ENCODE measurements at regions of chr6 and their contacts with region 1.

Region 1: DNA sequence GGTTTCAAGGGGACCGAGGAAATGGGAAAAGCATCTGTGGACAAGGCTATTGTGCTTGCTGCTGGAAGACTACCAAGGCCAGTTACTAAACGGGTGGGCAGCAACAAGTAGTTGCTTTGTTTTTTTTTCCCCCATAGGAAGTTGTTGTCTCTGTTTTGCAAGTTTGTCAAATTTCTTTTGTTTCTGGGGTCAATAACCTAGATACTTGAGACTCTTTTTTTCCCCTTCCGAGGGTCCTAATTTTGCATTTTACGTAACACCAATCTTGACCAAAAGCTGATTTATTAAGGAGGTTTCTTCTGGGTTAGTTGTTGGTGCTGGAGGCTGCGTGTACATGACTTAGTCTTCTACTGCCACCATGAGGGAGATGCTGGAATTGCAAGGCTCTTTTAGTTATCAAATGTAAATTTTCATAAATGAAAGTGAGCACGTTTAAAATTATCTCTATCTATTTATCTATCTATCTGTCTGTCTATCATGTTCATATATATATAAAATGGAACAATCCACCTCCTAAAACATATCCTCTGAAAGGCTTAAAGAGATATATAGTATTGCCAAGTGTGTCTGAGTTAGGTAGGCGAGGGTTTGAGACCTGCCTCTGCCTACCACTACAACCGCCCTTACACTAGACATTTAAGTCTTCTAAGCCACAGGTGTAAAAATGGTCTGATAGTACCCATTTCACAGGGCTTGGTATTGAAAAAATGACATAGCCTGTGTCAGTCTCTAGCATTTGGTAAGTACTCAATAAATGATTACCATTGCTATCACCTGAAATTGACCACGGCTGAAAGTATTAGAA is 60.2 kb downstream of the GCLC start:
- DNase-seq: peak; percentile 36 to 75 (median 56)
- ATAC-seq: peak; percentile 81
- H3K4me3 ChIP-seq: no peak overlapping the region
- H3K27ac ChIP-seq: no peak overlapping the region
- H3K4me1 ChIP-seq: peaks cover 0 to 15% of the 10 kb centered on the region in 2 experiments; a peak in 2 of 5 replicates
- H3K27me3 ChIP-seq: no peaks in the 10 kb centered on the region; a peak in 1 of 5 replicates
- CTCF ChIP-seq: peak; percentile 84 to 98 (median 85)
- EP300 ChIP-seq: no peak
- POLR2A ChIP-seq: no peak
- RAD21 ChIP-seq: peak; percentile 94 to 98

Region 2: DNA sequence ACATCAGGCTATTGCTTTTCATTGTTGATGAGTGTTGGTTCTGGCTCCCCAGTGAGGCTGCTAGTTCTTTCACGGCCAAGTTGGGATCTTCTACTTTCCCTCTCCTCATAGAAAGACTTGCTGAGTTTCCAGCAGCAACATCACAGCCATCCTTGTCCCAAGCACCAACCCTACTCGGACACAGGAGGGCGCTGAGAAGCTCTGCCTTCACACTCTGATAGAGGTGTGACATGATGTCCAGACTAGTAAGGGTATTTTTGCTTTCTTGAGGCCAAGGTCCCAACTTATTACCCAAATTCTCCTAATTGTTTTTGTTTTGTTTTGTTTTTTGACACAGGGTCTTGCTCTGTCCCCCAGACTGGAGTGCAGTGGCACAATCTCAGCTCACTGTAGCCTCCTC is 333.0 kb before region 1 on chr6:
- CTCF ChIA-PET with region 1: interaction called, 4 read pairs
- POLR2A ChIA-PET with region 1: no interaction called
- in situ Hi-C with region 1: no loop called
- intact Hi-C with region 1: loop called (anchors 5 kb)
- DNase-seq: peak; percentile 20 to 45 (median 24)
- ATAC-seq: peak; percentile 96
- H3K4me3 ChIP-seq: no peak overlapping the region
- H3K27ac ChIP-seq: no peak overlapping the region
- H3K4me1 ChIP-seq: no peaks in the 10 kb centered on the region
- H3K27me3 ChIP-seq: peaks cover 33 to 41% of the 10 kb centered on the region in 2 experiments
- CTCF ChIP-seq: peak; percentile 53 to 63 (median 61)
- EP300 ChIP-seq: no peak
- POLR2A ChIP-seq: no peak
- RAD21 ChIP-seq: peak in 1 of 2 experiments; percentile 52; a peak in 2 of 4 replicates

Region 3: DNA sequence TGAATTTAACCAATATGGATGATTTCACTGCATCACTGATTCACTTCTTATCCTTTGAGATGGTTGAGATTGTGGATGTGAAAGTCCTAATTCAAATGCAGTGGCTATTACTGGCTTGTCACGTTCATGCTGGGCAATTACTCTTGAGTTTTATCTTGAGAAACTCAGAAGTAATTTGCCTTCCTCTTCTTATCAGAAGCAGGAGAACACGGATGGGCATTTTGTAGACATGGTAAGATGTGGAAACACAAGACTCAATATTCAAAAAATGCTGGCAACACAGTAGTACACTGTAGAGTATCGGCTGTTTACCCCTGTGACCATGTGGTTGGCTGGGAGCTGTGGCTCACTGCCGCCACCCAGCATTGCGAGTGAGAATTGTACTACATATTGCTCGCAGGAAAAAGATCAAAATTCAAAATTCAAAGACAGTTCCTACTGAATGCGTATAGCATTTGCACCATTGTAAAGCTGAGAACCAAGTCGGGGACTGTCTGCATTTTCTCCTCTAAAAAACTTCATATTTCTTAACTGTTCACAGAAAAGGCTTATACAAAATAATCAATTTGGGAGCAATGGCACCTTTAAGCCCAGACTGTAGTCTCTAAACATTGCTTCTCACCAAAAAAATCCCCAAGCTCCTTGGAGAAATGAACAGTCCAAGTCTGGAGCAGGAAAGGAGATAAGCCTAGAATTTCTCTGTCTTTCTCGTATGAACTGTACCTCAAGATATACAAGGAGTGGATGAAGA is 74.0 kb before region 1 on chr6:
- CTCF ChIA-PET with region 1: interaction called, 4 read pairs
- POLR2A ChIA-PET with region 1: no interaction called
- in situ Hi-C with region 1: no loop called
- intact Hi-C with region 1: loop called (anchors 2 kb)
- DNase-seq: peak; percentile 23 to 74 (median 52)
- ATAC-seq: peak; percentile 99
- H3K4me3 ChIP-seq: no peak overlapping the region
- H3K27ac ChIP-seq: no peak overlapping the region
- H3K4me1 ChIP-seq: no peaks in the 10 kb centered on the region; a peak in 1 of 5 replicates
- H3K27me3 ChIP-seq: peaks cover 4 to 9% of the 10 kb centered on the region in 2 experiments; a peak in 3 of 5 replicates
- CTCF ChIP-seq: peak; percentile 84 to 88 (median 86)
- EP300 ChIP-seq: peak; percentile 36; the same call in 1 of the 2 replicates
- POLR2A ChIP-seq: no peak
- RAD21 ChIP-seq: peak; percentile 87 to 96

Region 4: DNA sequence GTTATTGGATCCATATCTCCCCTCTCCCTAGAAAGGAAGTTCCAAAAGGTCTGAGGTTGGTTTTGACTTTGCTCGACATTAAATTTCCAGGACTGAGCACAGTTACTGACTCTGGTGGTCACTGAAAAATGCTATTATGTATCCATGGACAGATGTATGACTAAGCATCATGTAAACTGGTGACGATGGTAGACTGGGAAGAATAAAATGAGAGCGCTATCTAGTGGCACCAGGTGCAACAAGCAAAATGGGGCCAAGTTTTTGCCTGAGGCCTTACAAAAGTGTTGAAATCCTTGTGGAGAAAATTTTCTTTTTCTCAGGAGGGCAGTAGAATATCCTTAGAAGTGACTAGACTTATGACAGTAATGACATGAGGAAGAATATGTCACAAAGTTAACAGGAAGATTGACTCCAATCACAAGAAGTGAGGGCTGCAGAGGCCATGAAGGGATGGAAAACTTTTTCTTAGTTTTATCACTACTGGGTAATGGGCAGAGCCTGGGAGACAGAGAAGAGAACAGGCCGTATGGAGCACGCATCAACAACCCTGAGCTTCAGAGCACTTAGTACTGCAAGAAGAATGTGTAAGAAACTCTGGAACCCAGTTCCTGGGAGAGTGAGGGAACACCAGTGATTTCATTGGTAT is 47.0 kb before region 1 on chr6:
- CTCF ChIA-PET with region 1: interaction called, 15 read pairs
- POLR2A ChIA-PET with region 1: no interaction called
- in situ Hi-C with region 1: no loop called
- intact Hi-C with region 1: loop called (anchors 1 kb)
- DNase-seq: peak; percentile 37 to 79 (median 52)
- ATAC-seq: peak; percentile 98
- H3K4me3 ChIP-seq: no peak overlapping the region
- H3K27ac ChIP-seq: no peak overlapping the region
- H3K4me1 ChIP-seq: peaks cover 0 to 4% of the 10 kb centered on the region in 2 experiments; a peak in 1 of 5 replicates
- H3K27me3 ChIP-seq: peaks cover 4 to 10% of the 10 kb centered on the region in 2 experiments; a peak in 2 of 5 replicates
- CTCF ChIP-seq: peak; percentile 85 to 96 (median 88)
- EP300 ChIP-seq: peak; percentile 32; the same call in 1 of the 2 replicates
- POLR2A ChIP-seq: no peak
- RAD21 ChIP-seq: peak; percentile 92 to 96

Measured in K562 (cell line).